Heart right ventricle (tissue), 16 donors: ENCODE measurements at regions of chr14 and their contacts with region 1.

Region 1: GRCh38 chr14:22556990-22557623 is 31.9 kb downstream of the DAD1 start:
- DNase-seq: peak; percentile 85 to 88
- ATAC-seq: peak; percentile 87 to 92 (median 90)
- H3K4me3 ChIP-seq: peak overlapping the region in 8 of 10 donors; percentile 28 to 51 (median 40)
- H3K27ac ChIP-seq: peak overlapping the region in 9 of 10 donors; percentile 37 to 91 (median 60)
- H3K4me1 ChIP-seq: peaks cover 8 to 81% (median 36%) of the 10 kb centered on the region in 9 donors
- H3K27me3 ChIP-seq: no peaks in the 10 kb centered on the region
- CTCF ChIP-seq: peak in 8 of 9 donors; percentile 95 to 100 (median 98)

Region 2: DNA sequence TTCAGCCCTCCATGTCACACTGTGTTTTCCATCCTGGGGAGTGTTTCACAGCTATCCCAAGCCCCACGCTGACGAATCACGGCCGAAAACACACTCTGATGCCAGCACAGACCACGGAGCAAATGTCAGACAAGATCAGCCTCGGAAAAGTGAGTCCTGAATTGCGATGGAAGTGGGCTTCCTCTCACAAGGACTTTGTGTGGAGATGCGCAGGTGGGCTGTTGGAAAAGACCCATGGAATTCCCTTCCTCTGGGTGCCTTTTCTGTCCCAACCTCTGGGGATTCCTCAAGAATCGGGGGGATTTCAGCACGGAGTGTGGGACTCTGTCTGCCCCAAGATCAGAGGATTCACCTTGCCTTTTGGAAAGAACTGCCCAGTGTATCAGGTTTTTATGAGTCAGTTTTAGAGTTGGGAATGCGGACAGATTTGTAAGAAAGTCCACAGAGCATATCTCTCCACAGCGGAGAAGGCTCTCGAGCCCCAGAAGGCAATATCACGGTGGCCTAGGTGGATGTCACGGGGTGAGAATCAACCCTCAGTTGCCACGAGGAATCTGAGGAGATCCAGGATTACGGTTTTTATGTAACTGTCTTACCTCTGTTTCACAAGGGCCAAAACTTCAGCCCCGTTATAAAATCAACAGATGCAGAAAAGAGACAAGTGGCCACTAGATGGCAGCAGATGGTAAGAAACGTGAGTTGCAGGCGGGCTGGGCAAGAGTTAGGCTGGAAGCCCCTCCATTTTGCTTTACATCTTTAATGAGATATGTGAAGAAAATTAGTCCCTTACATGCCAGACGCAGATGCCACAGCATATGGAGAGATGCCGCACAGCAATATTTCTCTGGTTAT is 170.0 kb before region 1 on chr14:
- intact Hi-C with region 1: loop called in 9 of 10 experiments (anchors 5 to 10 kb)
- DNase-seq: peak in 1 of 2 donors; percentile 80
- ATAC-seq: peak in 7 of 8 donors; percentile 51 to 76 (median 62)
- H3K4me3 ChIP-seq: no peak overlapping the region
- H3K27ac ChIP-seq: no peak overlapping the region
- H3K4me1 ChIP-seq: peaks cover 0 to 12% (median 0%) of the 10 kb centered on the region in 9 donors
- H3K27me3 ChIP-seq: peaks cover 0 to 27% (median 19%) of the 10 kb centered on the region in 7 donors
- CTCF ChIP-seq: peak; percentile 66 to 87 (median 81)

Region 3: DNA sequence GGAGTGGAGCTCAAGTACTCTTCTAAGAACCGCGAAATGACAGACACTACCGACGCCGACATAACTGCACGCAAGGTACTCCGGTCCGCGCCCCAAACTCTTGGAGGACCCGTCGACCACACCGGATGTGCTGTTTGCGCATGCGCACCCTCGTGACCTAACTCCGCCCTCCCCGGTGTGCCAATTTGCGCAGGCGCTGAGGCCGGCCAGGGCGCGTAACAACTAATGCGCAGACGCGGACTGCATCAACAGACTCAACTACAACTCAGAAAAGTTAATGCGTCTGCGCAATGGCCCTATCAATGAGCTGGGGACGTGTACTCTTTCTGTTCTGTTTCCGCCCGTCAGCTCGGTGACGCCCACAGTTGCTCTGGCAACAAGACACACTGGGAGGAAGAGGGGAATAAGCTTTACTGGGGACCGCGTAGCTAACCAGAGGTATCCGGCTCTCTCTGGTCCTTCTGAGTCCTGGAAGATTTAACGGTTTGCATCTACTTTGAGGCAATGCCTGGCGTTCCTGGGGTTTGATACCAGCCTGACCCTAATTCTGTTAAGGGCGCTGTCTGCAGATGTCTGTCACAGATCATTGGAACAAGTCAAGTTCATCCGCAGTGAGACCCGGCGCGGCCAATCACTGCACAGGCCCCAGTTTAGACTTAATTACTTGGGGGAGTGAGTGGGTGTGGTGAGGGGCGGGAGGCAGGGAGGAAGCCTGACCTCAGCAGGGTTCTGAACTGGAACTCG is 32.2 kb after region 1 on chr14 and contains the start of gene DAD1:
- intact Hi-C with region 1: loop called in 1 of 10 experiments (anchors 2 kb)
- DNase-seq: peak; percentile 99
- ATAC-seq: peak; percentile 98 to 99 (median 99)
- H3K4me3 ChIP-seq: peak within 1 kb of the TSS; percentile 48 to 94 (median 73)
- H3K27ac ChIP-seq: peak within 1 kb of the TSS; percentile 76 to 96 (median 90)
- H3K4me1 ChIP-seq: peaks cover 3 to 55% (median 47%) of the 10 kb centered on the region in 9 donors
- H3K27me3 ChIP-seq: no peaks in the 10 kb centered on the region
- CTCF ChIP-seq: no peak
- total RNA-seq, gene DAD1: 115 to 182 (median 136) TPM

Region 4: GRCh38 chr14:22614224-22614799 is 57.2 kb after region 1 on chr14:
- intact Hi-C with region 1: no loop called
- DNase-seq: no peak
- ATAC-seq: peak in 6 of 8 donors; percentile 22 to 61 (median 46)
- H3K4me3 ChIP-seq: no peak overlapping the region
- H3K27ac ChIP-seq: no peak overlapping the region
- H3K4me1 ChIP-seq: peaks cover 0 to 12% (median 7%) of the 10 kb centered on the region in 9 donors
- H3K27me3 ChIP-seq: no peaks in the 10 kb centered on the region
- CTCF ChIP-seq: no peak

Region 5: GRCh38 chr14:22766456-22767322 is 209.6 kb after region 1 on chr14 and contains the start of gene OXA1L:
- intact Hi-C with region 1: loop called in 2 of 10 experiments (anchors 5 to 10 kb)
- DNase-seq: peak; percentile 94 to 99
- ATAC-seq: peak; percentile 92 to 97 (median 96)
- H3K4me3 ChIP-seq: peak within 1 kb of the TSS; percentile 65 to 97 (median 86)
- H3K27ac ChIP-seq: peak within 1 kb of the TSS; percentile 85 to 95 (median 90)
- H3K4me1 ChIP-seq: peaks cover 0 to 42% (median 24%) of the 10 kb centered on the region in 9 donors
- H3K27me3 ChIP-seq: no peaks in the 10 kb centered on the region
- CTCF ChIP-seq: no peak
- total RNA-seq, gene OXA1L: 138 to 219 (median 189) TPM

Region 6: DNA sequence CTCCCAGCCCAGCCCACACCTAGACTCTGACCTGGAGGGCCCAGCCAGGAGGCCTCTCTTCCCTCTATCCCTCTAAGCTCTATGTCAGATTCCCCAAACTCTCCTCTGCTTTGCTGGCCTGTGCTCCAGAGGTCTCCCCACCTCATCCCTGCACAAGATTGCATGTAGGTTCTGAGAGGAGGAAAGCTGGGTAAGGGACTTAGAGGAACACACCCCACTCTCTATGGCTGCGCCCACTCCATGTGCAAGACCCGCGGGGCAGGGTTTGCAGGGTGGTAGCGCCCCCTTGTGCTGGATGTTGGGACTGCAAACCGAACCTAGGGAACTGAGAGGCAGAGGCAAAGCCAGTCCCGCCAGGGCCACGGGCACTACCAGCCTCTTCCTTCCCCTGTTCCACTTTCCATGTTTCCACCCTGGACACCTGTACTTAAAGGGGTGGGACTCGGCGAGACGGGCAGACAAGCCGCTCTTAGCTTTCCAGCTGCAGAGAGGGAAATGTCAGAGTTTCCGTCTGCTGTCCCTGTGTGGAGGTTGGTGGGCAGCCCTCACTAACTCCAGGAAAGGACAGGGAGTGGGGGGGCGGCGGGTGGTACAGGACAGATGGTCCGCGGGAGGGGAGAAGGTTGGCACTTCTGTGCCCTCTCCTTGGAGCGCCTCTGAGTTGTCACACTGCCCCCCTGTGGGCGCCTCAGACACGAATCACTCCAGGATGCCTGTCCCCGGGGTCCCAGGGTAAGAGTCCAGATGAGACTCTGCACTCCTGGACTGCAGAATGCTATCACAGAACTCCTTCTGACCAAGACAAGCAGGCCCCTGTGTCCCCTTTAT is 296.0 kb after region 1 on chr14:
- intact Hi-C with region 1: loop called in 8 of 10 experiments (anchors 1 to 10 kb)
- DNase-seq: peak; percentile 90 to 92
- ATAC-seq: peak; percentile 48 to 80 (median 64)
- H3K4me3 ChIP-seq: peak overlapping the region; percentile 24 to 61 (median 53)
- H3K27ac ChIP-seq: peak overlapping the region in 7 of 10 donors; percentile 5 to 79 (median 56)
- H3K4me1 ChIP-seq: peaks cover 19 to 54% (median 47%) of the 10 kb centered on the region in 9 donors
- H3K27me3 ChIP-seq: no peaks in the 10 kb centered on the region
- CTCF ChIP-seq: peak; percentile 85 to 97 (median 90)

Region 7: DNA sequence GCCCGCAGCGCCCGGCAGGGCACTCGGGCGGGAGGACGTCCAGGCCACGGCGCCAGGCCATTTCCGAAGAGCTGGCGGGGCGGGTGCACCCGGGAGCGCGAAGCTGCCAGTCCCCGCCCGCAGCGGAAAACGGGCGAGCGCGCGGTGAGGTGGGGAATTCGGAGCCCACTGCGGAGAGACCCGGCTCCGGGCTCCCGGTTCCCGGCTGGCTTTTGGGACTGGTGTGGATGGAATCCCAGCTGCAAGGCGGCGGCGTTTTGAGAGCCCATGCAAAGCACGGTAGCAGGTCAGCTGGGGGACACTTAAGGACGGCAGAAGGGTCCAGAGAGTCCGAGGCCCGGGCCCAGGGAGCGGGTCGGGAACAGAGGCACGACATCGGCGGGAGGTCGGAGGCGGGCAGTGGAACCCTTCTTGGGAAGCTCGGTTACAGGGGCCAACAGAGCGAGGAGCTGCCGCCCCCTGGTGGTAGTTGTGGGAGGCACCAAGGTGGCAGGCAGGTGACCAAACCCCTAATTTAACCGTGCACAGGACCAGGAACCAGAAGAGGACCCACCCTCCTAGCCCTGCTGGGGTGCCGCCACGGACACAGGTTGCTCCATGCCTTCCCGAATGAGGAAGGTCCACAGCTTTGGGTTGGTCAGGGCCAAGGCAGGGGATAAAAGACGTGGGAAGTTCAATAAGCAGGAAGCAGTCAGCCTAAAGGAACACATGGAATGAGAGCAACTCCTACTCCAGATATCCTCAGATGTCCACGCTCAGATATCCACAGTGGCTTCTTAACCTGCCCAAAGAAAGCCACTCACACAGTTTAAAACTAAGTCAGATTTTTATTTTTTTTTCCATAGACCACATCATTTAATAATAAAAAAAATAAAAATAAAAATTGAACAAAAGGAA is 500.9 kb after region 1 on chr14:
- intact Hi-C with region 1: loop called in 3 of 10 experiments (anchors 5 to 10 kb)
- DNase-seq: peak; percentile 88
- ATAC-seq: peak; percentile 63 to 84 (median 80)
- H3K4me3 ChIP-seq: peak overlapping the region; percentile 48 to 91 (median 72)
- H3K27ac ChIP-seq: peak overlapping the region in 8 of 10 donors; percentile 39 to 68 (median 54)
- H3K4me1 ChIP-seq: peaks cover 5 to 41% (median 25%) of the 10 kb centered on the region in 9 donors
- H3K27me3 ChIP-seq: no peaks in the 10 kb centered on the region
- CTCF ChIP-seq: peak; percentile 94 to 98 (median 96)